Naive thymus-derived CD4-positive, alpha-beta T cell (primary cell): ENCODE measurements at regions of chr4 and their contacts with region 1.

Region 1: DNA sequence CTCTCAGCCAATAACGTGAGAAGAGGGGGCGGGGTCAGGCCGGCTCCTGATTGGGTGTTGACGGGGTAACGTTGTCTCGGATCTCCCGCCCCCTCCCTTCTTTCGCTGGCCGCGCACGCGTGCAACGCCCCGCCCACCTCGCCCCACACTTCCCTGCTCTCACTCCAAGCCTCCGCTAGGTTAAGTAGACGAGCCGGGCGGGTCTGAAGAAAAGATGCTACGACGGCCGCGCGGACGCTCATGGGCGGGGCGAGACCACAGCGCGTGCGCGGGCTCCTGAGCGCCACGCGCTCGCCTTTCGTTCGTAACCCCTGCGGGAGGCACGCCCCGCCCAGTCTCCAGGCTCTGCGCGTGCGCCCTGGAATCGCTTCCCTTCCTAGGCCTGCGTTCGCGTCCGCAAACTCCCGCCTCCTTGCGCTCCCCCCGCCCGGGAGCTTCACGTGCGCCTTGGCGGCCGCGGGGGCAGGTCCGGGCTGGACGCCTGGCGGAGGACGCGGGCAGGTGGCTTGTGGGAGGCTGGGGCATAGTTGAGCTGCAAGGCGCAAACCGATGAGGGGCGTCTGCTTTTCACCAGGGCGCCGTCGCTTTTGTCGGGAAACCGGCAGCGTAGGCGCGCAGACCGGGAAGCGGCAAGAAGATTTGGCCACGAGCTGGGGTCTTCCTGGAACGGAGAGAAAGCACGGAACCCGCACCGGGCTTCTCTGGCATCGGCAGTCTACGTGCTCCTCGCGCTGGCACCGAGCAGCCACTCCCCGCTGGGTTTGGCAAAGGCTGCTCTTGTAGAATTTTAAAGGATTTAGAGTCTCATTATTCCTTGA is 467 bp upstream of the PGRMC2 start:
- DNase-seq: peak; percentile 97 to 100 (median 98)
- ATAC-seq: peak; percentile 90
- H3K4me3 ChIP-seq: peak overlapping the region; percentile 88
- H3K4me3 Mint-ChIP-seq: peak overlapping the region; percentile 81 to 98 (median 87)
- H3K27ac ChIP-seq: peak overlapping the region; percentile 98
- H3K27ac Mint-ChIP-seq: peak overlapping the region; percentile 82 to 99 (median 96)
- H3K4me1 ChIP-seq: peaks cover 12 to 25% of the 10 kb centered on the region in 2 donors
- H3K4me1 Mint-ChIP-seq: peaks cover 26 to 50% (median 46%) of the 10 kb centered on the region in 7 donors
- H3K27me3 ChIP-seq: no peaks in the 10 kb centered on the region
- H3K27me3 Mint-ChIP-seq: no peaks in the 10 kb centered on the region

Region 2: DNA sequence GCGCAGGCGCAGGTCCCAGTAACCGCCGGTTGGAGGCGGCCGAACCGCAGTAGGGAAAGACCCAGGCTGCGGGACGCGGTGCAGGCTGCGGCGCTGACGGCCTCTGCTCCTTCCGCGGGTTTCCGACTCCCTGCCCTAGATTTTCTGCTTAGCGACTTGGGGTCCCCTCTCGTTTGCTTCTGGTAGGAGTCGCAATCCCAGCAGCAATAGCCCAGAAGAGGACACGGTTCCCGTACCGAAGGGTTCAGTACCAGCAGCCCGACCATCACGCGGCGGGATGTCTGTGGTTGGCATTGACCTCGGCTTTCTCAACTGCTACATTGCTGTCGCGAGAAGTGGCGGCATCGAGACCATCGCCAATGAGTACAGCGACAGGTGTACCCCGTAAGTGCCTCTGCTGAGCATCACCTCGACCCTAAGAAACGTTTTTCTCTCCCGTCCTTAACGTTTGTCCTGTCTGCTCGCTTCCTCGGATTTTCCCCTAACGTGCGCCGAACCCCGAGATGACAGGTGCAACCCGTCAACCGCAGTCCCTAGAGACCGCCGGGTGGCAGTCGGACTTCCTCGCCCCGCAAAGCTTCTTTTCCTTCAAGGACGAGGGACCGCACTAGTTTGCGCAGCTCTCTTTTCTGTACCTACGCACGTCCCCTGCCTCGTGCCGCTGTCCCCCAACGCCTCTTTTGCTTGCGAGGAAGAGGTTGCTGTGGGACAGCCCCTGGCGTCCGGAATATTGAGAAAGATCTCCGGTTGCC is 505.6 kb before region 1 on chr4 and contains the start of gene HSPA4L:
- CTCF ChIA-PET with region 1: no interaction called
- POLR2A ChIA-PET with region 1: no interaction called
- intact Hi-C with region 1: loop called in 1 of 2 experiments (anchors 5 kb)
- DNase-seq: peak in 8 of 9 donors; percentile 7 to 77 (median 22)
- ATAC-seq: peak; percentile 81
- H3K4me3 ChIP-seq: peak within 1 kb of the TSS; percentile 66
- H3K4me3 Mint-ChIP-seq: peak within 1 kb of the TSS; percentile 86 to 96 (median 91)
- H3K27ac ChIP-seq: no peak within 1 kb of the TSS
- H3K27ac Mint-ChIP-seq: peak within 1 kb of the TSS in 5 of 9 donors; percentile 7 to 86 (median 49)
- H3K4me1 ChIP-seq: peaks cover 0 to 6% of the 10 kb centered on the region in 2 donors
- H3K4me1 Mint-ChIP-seq: peaks cover 13 to 20% (median 18%) of the 10 kb centered on the region in 7 donors
- H3K27me3 ChIP-seq: peaks cover 20 to 21% of the 10 kb centered on the region in 2 donors
- H3K27me3 Mint-ChIP-seq: peaks cover 64 to 78% (median 67%) of the 10 kb centered on the region in 5 donors
- total RNA-seq, gene HSPA4L: 1.1 TPM in 1 of 5 experiments, not detected in the others

Region 3: DNA sequence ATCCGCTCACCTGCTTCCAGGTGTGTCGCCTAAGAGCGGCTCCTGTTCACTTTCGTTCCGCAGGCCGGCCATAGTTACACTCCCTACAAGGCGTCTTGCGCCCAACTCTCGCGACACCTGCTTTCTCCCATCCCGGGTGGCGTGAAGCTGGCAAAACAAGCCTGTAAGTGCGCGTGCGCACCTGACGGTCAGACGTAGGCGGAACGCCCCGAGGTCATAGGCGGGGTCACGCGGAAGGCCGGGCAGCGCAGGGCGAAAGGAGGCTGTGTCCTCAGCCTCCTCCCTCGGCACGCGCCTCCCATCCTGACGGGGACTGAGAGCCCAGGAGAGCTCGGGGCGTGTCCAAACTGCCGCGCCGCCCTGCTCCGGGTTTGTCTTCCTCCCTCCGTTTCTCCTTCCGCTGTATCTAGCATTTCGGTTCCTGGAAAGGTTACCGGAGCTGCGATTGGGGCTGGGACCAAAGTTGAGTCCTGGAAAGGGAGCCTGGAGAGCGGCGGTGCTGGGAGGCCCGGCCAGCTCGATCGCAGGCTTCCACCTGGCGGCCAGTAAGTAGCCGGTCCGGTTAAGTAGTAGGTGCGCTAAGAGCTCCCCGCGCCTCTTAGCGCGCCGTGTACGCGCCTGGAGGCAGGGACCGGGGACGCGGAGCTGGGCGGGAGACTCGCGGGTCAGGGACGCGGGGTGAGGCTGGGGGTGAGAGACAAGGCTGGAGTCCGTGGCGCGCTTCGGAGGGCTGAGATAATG is 322.8 kb before region 1 on chr4 and contains the starts of genes ABHD18 and MFSD8:
- CTCF ChIA-PET with region 1: no interaction called
- POLR2A ChIA-PET with region 1: interaction called, 10 read pairs
- intact Hi-C with region 1: loop called (anchors 1 kb)
- DNase-seq: peak; percentile 93 to 98 (median 98)
- ATAC-seq: peak; percentile 96
- H3K4me3 ChIP-seq: peak within 1 kb of the TSS; percentile 100
- H3K4me3 Mint-ChIP-seq: peak within 1 kb of the TSS; percentile 78 to 98 (median 94)
- H3K27ac ChIP-seq: peak within 1 kb of the TSS; percentile 92
- H3K27ac Mint-ChIP-seq: peak within 1 kb of the TSS; percentile 88 to 99 (median 95)
- H3K4me1 ChIP-seq: peaks cover 5 to 13% of the 10 kb centered on the region in 2 donors
- H3K4me1 Mint-ChIP-seq: peaks cover 14 to 66% (median 52%) of the 10 kb centered on the region in 7 donors
- H3K27me3 ChIP-seq: no peaks in the 10 kb centered on the region
- H3K27me3 Mint-ChIP-seq: peaks cover 0 to 3% (median 0%) of the 10 kb centered on the region in 5 donors
- total RNA-seq, gene ABHD18: 22.4 to 26.6 (median 25.1) TPM
- total RNA-seq, gene MFSD8: 20.3 to 54.5 (median 23.0) TPM

Region 4: DNA sequence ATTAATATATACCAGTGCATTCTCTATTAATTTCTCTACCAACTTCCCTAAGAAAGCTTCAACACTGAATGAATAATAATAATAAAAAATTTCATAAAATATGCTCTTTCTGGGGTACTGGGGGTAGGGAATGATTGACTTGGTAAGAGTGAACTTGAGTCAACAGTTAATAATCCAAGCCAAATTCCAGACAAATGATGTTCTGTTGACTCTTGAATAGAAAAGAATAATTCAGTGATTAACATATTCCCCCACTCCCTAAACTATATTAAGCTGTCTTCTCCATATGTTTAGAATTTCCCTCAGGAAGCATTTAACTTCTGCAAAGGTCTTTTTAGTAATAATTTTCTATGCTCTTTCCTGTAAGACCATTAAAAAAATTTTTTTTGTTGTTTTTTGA is 12.7 kb before region 1 on chr4:
- CTCF ChIA-PET with region 1: interaction called, 4 read pairs
- POLR2A ChIA-PET with region 1: interaction called, 4 read pairs
- intact Hi-C with region 1: loop called in 1 of 2 experiments (anchors 2 kb)
- DNase-seq: no peak
- ATAC-seq: no peak
- H3K4me3 ChIP-seq: no peak overlapping the region
- H3K4me3 Mint-ChIP-seq: no peak overlapping the region
- H3K27ac ChIP-seq: no peak overlapping the region
- H3K27ac Mint-ChIP-seq: peak overlapping the region in 3 of 9 donors; percentile 27 to 51 (median 33)
- H3K4me1 ChIP-seq: no peaks in the 10 kb centered on the region
- H3K4me1 Mint-ChIP-seq: peaks cover 5 to 36% (median 13%) of the 10 kb centered on the region in 7 donors
- H3K27me3 ChIP-seq: no peaks in the 10 kb centered on the region
- H3K27me3 Mint-ChIP-seq: no peaks in the 10 kb centered on the region

Region 5: GRCh38 chr4:128863312-128864075 is 575.4 kb after region 1 on chr4:
- CTCF ChIA-PET with region 1: no interaction called
- POLR2A ChIA-PET with region 1: no interaction called
- intact Hi-C with region 1: loop called (anchors 2 kb)
- DNase-seq: peak; percentile 37 to 74 (median 60)
- ATAC-seq: peak; percentile 73
- H3K4me3 ChIP-seq: no peak overlapping the region
- H3K4me3 Mint-ChIP-seq: peak overlapping the region in 5 of 10 donors; percentile 2 to 55 (median 17)
- H3K27ac ChIP-seq: peak overlapping the region; percentile 58
- H3K27ac Mint-ChIP-seq: peak overlapping the region in 8 of 9 donors; percentile 59 to 91 (median 82)
- H3K4me1 ChIP-seq: peaks cover 21 to 22% of the 10 kb centered on the region in 2 donors
- H3K4me1 Mint-ChIP-seq: peaks cover 20 to 49% (median 45%) of the 10 kb centered on the region in 7 donors
- H3K27me3 ChIP-seq: no peaks in the 10 kb centered on the region
- H3K27me3 Mint-ChIP-seq: no peaks in the 10 kb centered on the region